ENCODE measurements at regions of chr15 and their contacts with region 1.

Region 1: DNA sequence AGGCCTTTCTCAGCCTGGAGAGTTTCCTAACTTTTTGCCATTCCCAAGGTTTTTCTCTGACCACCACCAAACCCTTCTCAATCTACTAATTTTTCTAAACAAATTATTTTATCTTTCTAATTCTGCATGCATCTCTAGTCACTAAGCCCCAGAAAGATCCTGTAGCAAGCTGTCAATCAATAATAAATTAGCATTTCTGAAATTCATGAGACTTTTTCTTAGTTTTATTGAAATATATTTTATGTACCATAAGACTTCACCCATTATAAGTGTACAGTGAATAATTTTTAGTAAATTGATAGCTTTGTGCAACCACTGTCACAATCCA is 22.4 kb upstream of the AP4E1 start:
- DNase-seq: no peak
- H3K4me3 Mint-ChIP-seq: no peak overlapping the region
- H3K27ac Mint-ChIP-seq: no peak overlapping the region
- H3K4me1 Mint-ChIP-seq: peaks cover 51% of the 10 kb centered on the region
- H3K27me3 Mint-ChIP-seq: no peaks in the 10 kb centered on the region

Region 2: DNA sequence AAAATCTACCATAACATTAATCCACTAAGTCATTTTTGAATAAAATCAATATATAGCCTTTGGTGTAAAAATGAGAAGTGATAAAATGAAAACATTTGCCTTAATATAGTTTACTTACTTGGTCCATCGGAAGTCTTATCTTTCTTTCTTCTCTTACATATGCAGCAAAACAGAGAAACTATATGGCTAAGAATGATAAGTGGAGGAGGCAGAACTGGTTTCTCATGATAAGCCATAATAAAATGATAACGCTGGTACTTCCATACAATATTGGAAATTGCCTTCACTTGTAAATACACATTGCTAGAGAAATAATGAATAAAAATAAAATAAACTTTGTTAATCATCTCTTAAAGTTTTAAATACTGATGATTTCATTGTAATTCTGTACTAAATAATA is 291.8 kb before region 1 on chr15:
- intact Hi-C with region 1: no loop called
- DNase-seq: no peak
- H3K4me3 Mint-ChIP-seq: no peak overlapping the region
- H3K27ac Mint-ChIP-seq: no peak overlapping the region
- H3K4me1 Mint-ChIP-seq: no peaks in the 10 kb centered on the region
- H3K27me3 Mint-ChIP-seq: no peaks in the 10 kb centered on the region

Region 3: GRCh38 chr15:50653156-50653745 is 232.9 kb before region 1 on chr15:
- intact Hi-C with region 1: loop called (anchors 1 kb)
- DNase-seq: no peak
- H3K4me3 Mint-ChIP-seq: no peak overlapping the region
- H3K27ac Mint-ChIP-seq: no peak overlapping the region
- H3K4me1 Mint-ChIP-seq: peaks cover 7% of the 10 kb centered on the region
- H3K27me3 Mint-ChIP-seq: no peaks in the 10 kb centered on the region

Region 4: DNA sequence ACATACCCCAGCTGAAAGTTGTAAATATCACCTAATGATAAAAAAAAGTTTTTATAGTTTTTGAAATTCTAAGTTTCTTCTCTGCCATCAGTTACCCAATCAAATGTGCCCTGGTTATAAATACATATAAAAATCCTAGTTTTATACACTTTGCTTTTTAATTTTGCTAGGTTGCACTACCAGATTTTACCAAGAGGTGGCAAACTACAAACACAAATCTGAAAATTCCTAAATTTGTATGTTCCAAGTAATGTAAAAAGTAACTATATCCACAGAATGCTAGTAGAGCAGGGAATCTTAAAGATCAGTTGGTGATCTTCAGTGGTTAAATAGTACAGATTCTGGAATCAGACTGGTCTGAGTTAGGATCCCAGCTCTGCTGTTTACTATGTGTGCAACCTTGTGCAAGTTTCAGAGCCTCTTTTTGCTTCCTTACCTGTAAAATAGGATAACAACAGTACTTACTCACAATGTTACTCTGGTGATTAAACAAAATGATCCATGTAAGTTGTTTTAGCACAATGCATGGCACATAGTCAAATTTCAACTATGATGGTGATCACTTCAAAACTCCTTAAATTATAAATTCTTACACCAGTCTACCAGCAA is 210.5 kb before region 1 on chr15:
- intact Hi-C with region 1: loop called (anchors 1 kb)
- DNase-seq: no peak
- H3K4me3 Mint-ChIP-seq: no peak overlapping the region
- H3K27ac Mint-ChIP-seq: no peak overlapping the region
- H3K4me1 Mint-ChIP-seq: peaks cover 15% of the 10 kb centered on the region
- H3K27me3 Mint-ChIP-seq: no peaks in the 10 kb centered on the region